K562 (cell line): ENCODE measurements at regions of chr2 and their contacts with region 1.

Region 1: DNA sequence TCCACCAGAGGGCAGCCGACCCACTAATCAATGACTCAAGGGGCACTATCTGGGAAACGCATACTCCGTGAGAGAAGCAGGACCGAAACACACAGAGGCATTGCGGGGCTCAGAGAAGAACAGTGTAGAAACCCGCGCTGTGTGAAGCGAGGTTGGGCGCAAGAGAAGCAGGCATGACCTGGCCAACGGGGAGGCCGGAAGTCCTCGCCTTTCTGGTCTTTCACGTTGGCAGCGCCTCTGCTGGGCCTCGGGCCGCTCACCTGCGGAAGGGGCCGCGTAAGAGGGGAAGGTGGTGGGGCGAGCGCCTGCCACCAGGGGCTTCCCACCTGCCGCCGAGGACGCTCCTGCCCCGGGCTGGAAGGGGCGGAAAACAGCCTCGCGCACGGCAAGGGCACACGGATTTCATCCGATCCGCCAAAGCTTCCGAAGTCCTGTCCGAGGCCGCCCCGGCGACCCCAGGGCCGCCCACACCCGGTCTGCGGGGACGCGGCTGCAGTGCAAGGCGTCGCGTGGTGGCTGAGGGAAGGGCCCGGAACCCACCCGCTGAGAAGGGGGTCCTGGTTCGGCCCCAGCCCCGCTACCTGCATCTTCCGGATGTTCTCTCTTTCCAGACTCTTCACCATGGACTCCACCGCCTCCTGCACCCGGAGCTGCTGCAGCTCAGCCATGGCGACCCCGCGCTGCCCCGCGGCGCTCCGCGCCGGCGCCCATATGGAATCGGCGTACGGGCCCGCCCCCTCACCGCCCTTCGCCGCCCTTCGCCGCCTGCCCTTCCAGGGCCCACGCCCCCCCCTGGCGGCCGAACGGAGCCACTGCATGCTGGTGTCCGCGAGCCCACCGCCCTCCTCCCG is at the start of gene FAM136A:
- DNase-seq: peak; percentile 91 to 96 (median 93)
- ATAC-seq: peak; percentile 96
- H3K4me3 ChIP-seq: peak within 1 kb of the TSS; percentile 55
- H3K27ac ChIP-seq: peak within 1 kb of the TSS; percentile 87
- H3K4me1 ChIP-seq: peaks cover 6 to 14% of the 10 kb centered on the region in 2 experiments; a peak in 4 of 5 replicates
- H3K27me3 ChIP-seq: peaks cover 0 to 5% of the 10 kb centered on the region in 2 experiments; a peak in 2 of 5 replicates
- CTCF ChIP-seq: peak; percentile 81 to 94 (median 89)
- EP300 ChIP-seq: no peak
- POLR2A ChIP-seq: peak; percentile 88
- RAD21 ChIP-seq: peak; percentile 62 to 77; a peak in 3 of 4 replicates
- polyA plus RNA-seq, gene FAM136A: 125 to 151 TPM

Region 2: DNA sequence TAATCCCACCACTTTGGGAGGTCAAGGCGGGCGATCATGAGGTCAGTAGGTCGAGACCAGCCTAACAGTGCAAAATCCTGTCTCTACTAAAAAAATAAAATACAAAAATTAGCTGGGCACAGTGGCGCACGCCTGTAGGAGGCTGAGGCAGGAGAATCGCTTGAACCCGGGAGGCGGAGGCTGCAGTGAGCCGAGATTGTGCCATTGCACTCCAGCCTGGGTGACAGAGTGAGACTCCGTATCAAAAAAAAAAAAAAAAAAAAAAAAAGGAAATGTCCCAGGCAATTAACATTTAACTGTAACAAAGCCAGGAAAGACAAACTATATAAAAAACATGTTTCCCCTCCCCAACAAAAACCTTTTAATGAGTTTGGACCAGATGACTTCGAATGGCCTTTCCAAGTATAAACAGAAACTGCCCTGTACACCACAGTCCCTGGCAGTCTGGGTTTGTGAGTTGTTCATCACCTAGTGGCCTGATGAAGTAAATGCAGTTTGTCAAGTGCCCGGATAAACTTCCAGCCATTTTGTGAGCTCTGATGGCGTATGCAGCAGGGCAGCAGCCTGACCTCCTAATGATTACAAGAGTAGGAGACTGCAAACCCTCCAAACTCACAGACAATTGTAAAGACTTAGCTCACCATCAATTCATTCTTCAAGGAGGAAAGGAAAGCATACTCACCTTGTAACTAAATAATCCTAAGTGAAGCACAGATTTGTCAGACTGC is 230.9 kb before region 1 on chr2:
- CTCF ChIA-PET with region 1: interaction called, 3 read pairs
- POLR2A ChIA-PET with region 1: no interaction called
- in situ Hi-C with region 1: loop called (anchors 10 kb)
- intact Hi-C with region 1: no loop called
- DNase-seq: peak; percentile 75 to 87 (median 81)
- ATAC-seq: peak; percentile 96
- H3K4me3 ChIP-seq: no peak overlapping the region
- H3K27ac ChIP-seq: peak overlapping the region; percentile 47; the same call in 1 of the 3 replicates
- H3K4me1 ChIP-seq: peaks cover 2 to 5% of the 10 kb centered on the region in 2 experiments; a peak in 3 of 5 replicates
- H3K27me3 ChIP-seq: no peaks in the 10 kb centered on the region
- CTCF ChIP-seq: peak; percentile 88 to 95 (median 89)
- EP300 ChIP-seq: no peak
- POLR2A ChIP-seq: no peak
- RAD21 ChIP-seq: peak; percentile 91 to 94

Region 3: GRCh38 chr2:70385966-70386595 is 84.5 kb after region 1 on chr2:
- CTCF ChIA-PET with region 1: no interaction called
- POLR2A ChIA-PET with region 1: no interaction called
- in situ Hi-C with region 1: no loop called
- intact Hi-C with region 1: no loop called
- DNase-seq: peak; percentile 12 to 56 (median 28)
- ATAC-seq: peak; percentile 88
- H3K4me3 ChIP-seq: no peak overlapping the region
- H3K27ac ChIP-seq: no peak overlapping the region
- H3K4me1 ChIP-seq: no peaks in the 10 kb centered on the region
- H3K27me3 ChIP-seq: peaks cover 6 to 17% of the 10 kb centered on the region in 2 experiments; a peak in 3 of 5 replicates
- CTCF ChIP-seq: peak; percentile 59 to 74 (median 66); a peak in 5 of 6 replicates
- EP300 ChIP-seq: no peak
- POLR2A ChIP-seq: no peak
- RAD21 ChIP-seq: peak; percentile 39 to 78; a peak in 3 of 4 replicates

Region 4: DNA sequence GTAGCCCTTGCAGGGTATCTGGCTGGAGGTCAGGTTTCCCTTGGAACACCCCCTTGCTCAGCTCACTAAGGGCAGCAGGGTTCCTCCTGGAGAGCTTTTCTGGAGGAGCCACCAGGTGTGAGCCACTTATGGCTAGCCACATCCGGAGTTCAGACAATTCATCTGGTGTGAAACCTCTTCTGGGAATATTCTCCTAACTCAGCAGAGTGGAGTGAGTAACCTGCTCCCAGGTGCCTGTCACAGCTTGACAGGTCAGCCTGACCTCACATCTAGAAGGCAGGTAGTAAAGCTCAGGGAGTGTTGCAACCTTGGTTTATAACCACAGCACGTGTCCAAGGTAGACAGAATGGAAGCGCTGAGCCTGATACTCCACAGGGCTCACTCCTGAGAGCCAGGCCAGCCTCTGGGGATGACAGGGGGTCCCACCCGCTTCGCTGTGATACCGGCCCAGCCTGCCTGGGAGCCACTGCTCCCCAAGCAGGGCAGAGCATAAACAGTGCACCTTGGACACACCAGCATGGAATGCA is 314.7 kb after region 1 on chr2:
- CTCF ChIA-PET with region 1: no interaction called
- POLR2A ChIA-PET with region 1: interaction called, 3 read pairs
- in situ Hi-C with region 1: no loop called
- intact Hi-C with region 1: loop called (anchors 10 kb)
- DNase-seq: no peak
- ATAC-seq: no peak
- H3K4me3 ChIP-seq: no peak overlapping the region
- H3K27ac ChIP-seq: no peak overlapping the region
- H3K4me1 ChIP-seq: no peaks in the 10 kb centered on the region
- H3K27me3 ChIP-seq: peaks cover 0 to 18% of the 10 kb centered on the region in 2 experiments; a peak in 3 of 5 replicates
- CTCF ChIP-seq: no peak
- EP300 ChIP-seq: no peak
- POLR2A ChIP-seq: no peak
- RAD21 ChIP-seq: no peak

Region 5: GRCh38 chr2:70767699-70768589 is 466.4 kb after region 1 on chr2 and contains the start of gene ADD2:
- CTCF ChIA-PET with region 1: no interaction called
- POLR2A ChIA-PET with region 1: no interaction called
- in situ Hi-C with region 1: no loop called
- intact Hi-C with region 1: loop called (anchors 5 kb)
- DNase-seq: peak; percentile 78 to 87 (median 85)
- ATAC-seq: peak; percentile 95
- H3K4me3 ChIP-seq: peak within 1 kb of the TSS; percentile 73
- H3K27ac ChIP-seq: peak within 1 kb of the TSS; percentile 65
- H3K4me1 ChIP-seq: peaks cover 2 to 12% of the 10 kb centered on the region in 2 experiments; a peak in 4 of 5 replicates
- H3K27me3 ChIP-seq: no peaks in the 10 kb centered on the region; a peak in 1 of 5 replicates
- CTCF ChIP-seq: peak; percentile 55 to 96 (median 84)
- EP300 ChIP-seq: no peak
- POLR2A ChIP-seq: peak; percentile 61; the same call in 1 of the 2 replicates
- RAD21 ChIP-seq: peak; percentile 21 to 64; a peak in 3 of 4 replicates
- polyA plus RNA-seq, gene ADD2: 3.5 to 4.0 TPM

Region 6: DNA sequence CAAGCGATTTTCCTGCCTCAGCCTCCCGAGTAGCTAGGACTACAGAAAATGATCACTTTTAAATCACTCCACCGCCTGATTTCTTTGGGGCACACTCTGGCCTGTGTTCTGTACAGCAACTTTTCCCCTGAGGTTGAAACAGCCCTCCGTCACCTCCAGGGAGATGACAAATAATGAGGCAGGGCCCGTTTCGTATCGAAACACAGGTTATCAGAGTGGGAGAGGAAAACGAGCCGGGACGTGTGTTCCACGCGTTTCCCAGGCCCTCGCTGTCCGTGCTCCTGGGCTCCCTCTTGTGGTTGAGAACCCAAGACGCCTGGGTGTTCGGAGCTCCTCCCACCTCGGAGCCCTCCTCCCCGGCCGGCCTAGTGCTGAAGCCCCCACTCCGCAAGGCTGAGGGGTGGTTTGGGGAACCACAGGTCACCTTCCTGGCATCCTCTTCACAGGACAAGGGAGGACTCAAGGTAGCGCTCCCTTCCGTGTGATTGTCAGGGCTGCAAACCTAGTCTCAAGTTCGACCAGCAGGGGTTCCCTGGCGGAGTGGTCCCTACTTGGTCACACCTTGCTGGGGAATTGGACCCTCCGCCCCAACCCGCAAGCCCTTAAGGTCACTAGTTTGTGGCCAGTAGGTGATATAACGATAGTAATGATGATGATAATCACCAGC is 646.9 kb after region 1 on chr2:
- CTCF ChIA-PET with region 1: no interaction called
- POLR2A ChIA-PET with region 1: no interaction called
- in situ Hi-C with region 1: no loop called
- intact Hi-C with region 1: loop called (anchors 10 kb)
- DNase-seq: peak; percentile 84 to 89 (median 86)
- ATAC-seq: peak; percentile 99
- H3K4me3 ChIP-seq: peak overlapping the region; percentile 4
- H3K27ac ChIP-seq: no peak overlapping the region
- H3K4me1 ChIP-seq: peaks cover 2 to 11% of the 10 kb centered on the region in 2 experiments; a peak in 3 of 5 replicates
- H3K27me3 ChIP-seq: peaks cover 2 to 19% of the 10 kb centered on the region in 2 experiments; a peak in 2 of 5 replicates
- CTCF ChIP-seq: peak; percentile 77 to 91 (median 90)
- EP300 ChIP-seq: no peak
- POLR2A ChIP-seq: no peak
- RAD21 ChIP-seq: peak in 1 of 2 experiments; percentile 59; a peak in 3 of 4 replicates